PC-3 (cell line): ENCODE measurements at regions of chr7 and their contacts with region 1.

Region 1: GRCh38 chr7:47100817-47101435 is 481.0 kb downstream of the TNS3 start:
- DNase-seq: peak; percentile 89
- ATAC-seq: peak; percentile 97
- H3K4me3 ChIP-seq: peak overlapping the region; percentile 67
- H3K27ac ChIP-seq: no peak overlapping the region
- H3K4me1 ChIP-seq: no peaks in the 10 kb centered on the region
- H3K27me3 ChIP-seq: no peaks in the 10 kb centered on the region
- CTCF ChIP-seq: peak; percentile 90

Region 2: DNA sequence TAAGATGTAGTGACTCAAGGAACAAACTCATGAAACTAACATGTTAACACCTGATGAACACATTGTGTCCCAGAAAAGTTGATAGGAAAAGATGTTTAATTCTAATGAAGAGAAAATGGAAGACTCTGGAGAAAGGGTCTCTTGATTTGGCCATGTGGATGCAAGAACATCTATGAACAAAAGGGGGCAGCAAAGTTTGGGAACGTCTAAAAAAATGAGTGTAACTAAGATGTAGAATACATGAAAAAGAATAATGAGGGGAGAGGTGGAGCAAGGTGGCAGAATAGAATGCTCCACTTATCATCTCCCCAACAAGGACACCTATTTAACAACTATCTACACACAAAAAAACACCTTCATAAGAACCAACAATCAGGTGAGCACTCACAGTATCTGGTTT is 324.1 kb before region 1 on chr7:
- CTCF ChIA-PET with region 1: no interaction called
- POLR2A ChIA-PET with region 1: no interaction called
- intact Hi-C with region 1: loop called (anchors 5 kb)
- DNase-seq: peak; percentile 47
- ATAC-seq: peak; percentile 38; the same call in 1 of the 2 replicates
- H3K4me3 ChIP-seq: no peak overlapping the region
- H3K27ac ChIP-seq: no peak overlapping the region
- H3K4me1 ChIP-seq: no peaks in the 10 kb centered on the region
- H3K27me3 ChIP-seq: no peaks in the 10 kb centered on the region
- CTCF ChIP-seq: peak; percentile 68

Region 3: DNA sequence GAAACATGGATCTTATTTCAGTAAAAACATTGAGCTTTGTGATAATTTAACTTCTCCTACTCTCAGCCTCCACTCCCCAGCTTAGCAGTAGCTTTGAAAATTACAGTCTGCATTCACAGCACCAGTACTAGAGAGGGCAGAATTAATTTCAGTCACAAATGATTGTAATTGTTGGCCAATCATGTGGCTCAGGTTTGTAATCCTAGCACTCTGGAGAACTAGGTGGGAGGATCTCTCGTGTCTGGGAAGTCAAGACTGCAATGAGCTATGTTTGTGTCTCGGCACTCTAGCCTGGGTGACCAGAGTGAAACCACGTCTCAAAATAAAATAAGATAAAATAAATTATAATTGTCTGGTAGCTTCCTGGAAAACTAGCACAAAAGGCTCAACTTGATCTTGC is 140.0 kb before region 1 on chr7:
- CTCF ChIA-PET with region 1: no interaction called
- POLR2A ChIA-PET with region 1: no interaction called
- intact Hi-C with region 1: no loop called
- DNase-seq: no peak
- ATAC-seq: no peak
- H3K4me3 ChIP-seq: no peak overlapping the region
- H3K27ac ChIP-seq: no peak overlapping the region
- H3K4me1 ChIP-seq: no peaks in the 10 kb centered on the region
- H3K27me3 ChIP-seq: no peaks in the 10 kb centered on the region
- CTCF ChIP-seq: no peak

Region 4: GRCh38 chr7:47066971-47067614 is 33.8 kb before region 1 on chr7:
- CTCF ChIA-PET with region 1: no interaction called
- POLR2A ChIA-PET with region 1: no interaction called
- intact Hi-C with region 1: no loop called
- DNase-seq: no peak
- ATAC-seq: no peak
- H3K4me3 ChIP-seq: no peak overlapping the region
- H3K27ac ChIP-seq: no peak overlapping the region
- H3K4me1 ChIP-seq: no peaks in the 10 kb centered on the region
- H3K27me3 ChIP-seq: no peaks in the 10 kb centered on the region
- CTCF ChIP-seq: no peak

Region 5: DNA sequence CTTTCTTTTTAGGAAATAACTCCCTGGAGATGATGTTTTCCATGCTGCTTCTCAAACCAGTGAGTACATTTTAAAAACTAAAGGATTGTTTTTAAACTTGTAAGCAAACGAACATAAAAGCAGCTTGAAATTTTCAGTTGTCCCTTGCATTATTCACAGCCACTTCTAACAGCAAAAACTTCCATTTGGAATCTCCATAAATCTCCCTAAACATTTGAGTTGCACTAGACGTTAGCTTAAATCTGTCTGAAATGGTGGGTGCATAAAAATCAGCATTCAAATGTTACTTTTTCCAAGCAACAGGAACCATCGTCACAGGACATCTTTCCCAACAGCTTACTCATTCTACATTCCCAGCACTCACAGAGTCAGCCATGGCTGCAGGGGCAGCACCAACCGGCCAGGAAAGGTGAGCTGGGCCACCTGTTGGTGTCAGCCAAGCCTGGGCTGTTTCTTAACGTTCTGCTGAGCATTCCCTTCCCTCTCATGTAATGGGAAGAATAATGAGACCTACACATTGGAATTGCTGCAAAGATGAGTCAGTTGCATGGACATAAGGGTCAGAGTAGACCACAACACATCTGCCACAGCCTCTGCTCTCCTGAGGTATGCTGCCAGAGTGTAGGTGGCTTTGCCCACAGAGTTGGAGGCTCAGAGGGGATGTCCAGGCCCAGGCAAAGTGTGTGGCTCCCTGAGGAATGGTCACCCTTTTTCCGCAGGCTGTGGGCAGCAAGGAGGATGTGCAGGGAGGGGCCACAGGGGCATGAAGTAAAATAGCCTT is 317.9 kb after region 1 on chr7:
- CTCF ChIA-PET with region 1: no interaction called
- POLR2A ChIA-PET with region 1: no interaction called
- intact Hi-C with region 1: no loop called
- DNase-seq: no peak
- ATAC-seq: no peak; the same call in 1 of the 2 replicates
- H3K4me3 ChIP-seq: no peak overlapping the region
- H3K27ac ChIP-seq: no peak overlapping the region
- H3K4me1 ChIP-seq: no peaks in the 10 kb centered on the region
- H3K27me3 ChIP-seq: no peaks in the 10 kb centered on the region
- CTCF ChIP-seq: no peak